ENCODE measurements at regions of chr7 and their contacts with region 1.

Region 1: DNA sequence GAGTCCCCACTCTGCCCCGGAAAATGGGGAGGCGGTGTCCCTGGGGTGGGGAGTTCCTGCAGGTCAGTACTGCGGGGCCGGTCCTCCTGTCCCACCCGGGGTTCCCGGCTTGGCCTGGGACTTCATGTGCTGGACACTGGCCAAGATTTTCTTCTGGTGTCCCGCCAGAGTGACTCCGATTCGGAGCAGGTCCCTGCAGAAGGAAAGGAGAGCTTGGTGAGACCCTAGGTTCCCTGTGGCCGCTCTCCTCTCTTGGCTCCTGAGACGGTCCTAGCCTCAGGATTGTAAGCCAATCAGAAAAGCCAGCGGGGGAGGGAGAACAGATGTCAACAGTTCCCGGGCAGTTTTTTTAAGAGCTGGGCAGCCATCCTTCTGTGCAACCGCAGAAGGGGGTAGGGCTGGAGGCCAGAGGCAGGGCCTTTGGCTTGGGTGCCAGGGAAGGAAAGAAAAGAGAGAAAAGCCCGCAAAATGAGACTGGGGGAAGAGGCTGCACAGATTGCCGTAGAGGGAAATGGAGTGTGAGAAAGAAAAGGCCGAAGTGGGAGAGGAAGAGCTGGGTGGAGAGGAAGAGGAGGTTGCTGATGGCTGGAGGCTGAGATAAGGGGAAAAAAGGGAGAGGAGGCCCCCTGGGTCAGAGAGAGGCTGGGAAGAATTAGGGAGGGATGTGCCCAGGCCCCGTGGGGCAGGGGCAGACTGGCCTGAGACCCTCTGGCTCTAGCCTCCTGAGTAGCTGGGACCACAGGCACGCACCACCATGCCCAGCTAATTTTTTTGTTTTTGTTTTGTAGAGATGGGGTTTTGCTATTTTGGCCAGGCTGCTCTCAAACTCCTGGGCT is 23.7 kb downstream of the EPHB4 start:
- DNase-seq: peak; percentile 80 to 86 (median 84)
- ATAC-seq: peak; percentile 68
- H3K4me3 ChIP-seq: no peak overlapping the region
- H3K27ac ChIP-seq: peak overlapping the region; percentile 39; the same call in 1 of the 3 replicates
- H3K4me1 ChIP-seq: peaks cover 46 to 66% of the 10 kb centered on the region in 2 experiments
- H3K27me3 ChIP-seq: no peaks in the 10 kb centered on the region
- CTCF ChIP-seq: no peak
- EP300 ChIP-seq: peak; percentile 16; the same call in 1 of the 2 replicates
- POLR2A ChIP-seq: 0 out of 2 replicates have a peak, but pooled peaks have one; percentile 27
- RAD21 ChIP-seq: no peak

Region 2: GRCh38 chr7:100827330-100828227 is 24.0 kb after region 1 on chr7 and contains the start of gene EPHB4:
- CTCF ChIA-PET with region 1: interaction called, 10 read pairs
- POLR2A ChIA-PET with region 1: interaction called, 5 read pairs
- in situ Hi-C with region 1: no loop called
- intact Hi-C with region 1: loop called (anchors 1 kb)
- DNase-seq: peak; percentile 89 to 97 (median 91)
- ATAC-seq: peak; percentile 72
- H3K4me3 ChIP-seq: peak within 1 kb of the TSS; percentile 71
- H3K27ac ChIP-seq: peak within 1 kb of the TSS; percentile 60
- H3K4me1 ChIP-seq: peaks cover 17 to 61% of the 10 kb centered on the region in 2 experiments; a peak in 4 of 5 replicates
- H3K27me3 ChIP-seq: no peaks in the 10 kb centered on the region
- CTCF ChIP-seq: peak; percentile 77 to 88 (median 80)
- EP300 ChIP-seq: no peak
- POLR2A ChIP-seq: peak; percentile 74
- RAD21 ChIP-seq: peak; percentile 31 to 63; a peak in 2 of 4 replicates
- polyA plus RNA-seq, gene EPHB4: 1.2 to 1.5 TPM

Region 3: DNA sequence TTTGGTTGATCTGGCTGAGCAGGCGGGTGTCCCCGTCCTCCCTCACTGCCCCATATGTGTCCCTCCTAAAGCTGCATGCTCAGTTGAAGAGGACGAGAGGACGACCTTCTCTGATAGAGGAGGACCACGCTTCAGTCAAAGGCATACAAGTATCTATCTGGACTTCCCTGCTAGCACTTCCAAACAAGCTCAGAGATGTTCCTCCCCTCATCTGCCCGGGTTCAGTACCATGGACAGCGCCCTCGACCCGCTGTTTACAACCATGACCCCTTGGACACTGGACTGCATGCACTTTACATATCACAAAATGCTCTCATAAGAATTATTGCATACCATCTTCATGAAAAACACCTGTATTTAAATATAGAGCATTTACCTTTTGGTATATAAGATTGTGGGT is 254.7 kb after region 1 on chr7:
- CTCF ChIA-PET with region 1: no interaction called
- POLR2A ChIA-PET with region 1: no interaction called
- in situ Hi-C with region 1: no loop called
- intact Hi-C with region 1: loop called (anchors 1 kb)
- DNase-seq: peak; percentile 80 to 86 (median 84)
- ATAC-seq: peak; percentile 92
- H3K4me3 ChIP-seq: no peak overlapping the region
- H3K27ac ChIP-seq: no peak overlapping the region
- H3K4me1 ChIP-seq: no peaks in the 10 kb centered on the region
- H3K27me3 ChIP-seq: peaks cover 5 to 30% of the 10 kb centered on the region in 2 experiments; a peak in 3 of 5 replicates
- CTCF ChIP-seq: no peak
- EP300 ChIP-seq: no peak
- POLR2A ChIP-seq: no peak
- RAD21 ChIP-seq: no peak

Measured in K562 (cell line).